ENCODE measurements at regions of chr1 and their contacts with region 1.

Region 1: GRCh38 chr1:45521398-45522323 is at the start of gene PRDX1:
- DNase-seq: peak; percentile 97
- H3K4me3 Mint-ChIP-seq: peak within 1 kb of the TSS; percentile 95
- H3K27ac Mint-ChIP-seq: peak within 1 kb of the TSS; percentile 88
- H3K4me1 Mint-ChIP-seq: peaks cover 49% of the 10 kb centered on the region
- H3K27me3 Mint-ChIP-seq: peaks cover 10% of the 10 kb centered on the region
- total RNA-seq, gene PRDX1: 296 to 309 TPM

Region 2: DNA sequence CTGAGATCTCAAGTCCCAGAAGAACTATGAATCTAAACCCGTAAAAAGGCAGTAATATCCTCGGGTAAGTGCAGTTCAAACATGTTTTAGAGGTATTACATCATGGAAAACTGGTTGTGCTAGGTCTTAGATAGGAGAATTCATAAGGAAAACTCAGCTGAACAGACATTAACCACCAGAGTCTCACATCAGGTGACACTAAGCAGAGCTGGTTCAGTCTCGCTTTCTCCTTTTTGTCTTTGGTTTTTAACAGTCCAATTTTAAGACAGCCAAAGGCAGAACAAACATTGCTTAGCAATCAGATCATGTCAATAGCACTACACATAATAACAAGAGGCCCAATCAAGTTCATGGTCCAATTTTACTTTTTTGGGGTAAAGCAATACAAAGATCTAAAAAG is 118.4 kb before region 1 on chr1:
- CTCF ChIA-PET with region 1: no interaction called
- POLR2A ChIA-PET with region 1: no interaction called
- DNase-seq: no peak
- H3K4me3 Mint-ChIP-seq: no peak overlapping the region
- H3K27ac Mint-ChIP-seq: no peak overlapping the region
- H3K4me1 Mint-ChIP-seq: no peaks in the 10 kb centered on the region
- H3K27me3 Mint-ChIP-seq: no peaks in the 10 kb centered on the region

Region 3: DNA sequence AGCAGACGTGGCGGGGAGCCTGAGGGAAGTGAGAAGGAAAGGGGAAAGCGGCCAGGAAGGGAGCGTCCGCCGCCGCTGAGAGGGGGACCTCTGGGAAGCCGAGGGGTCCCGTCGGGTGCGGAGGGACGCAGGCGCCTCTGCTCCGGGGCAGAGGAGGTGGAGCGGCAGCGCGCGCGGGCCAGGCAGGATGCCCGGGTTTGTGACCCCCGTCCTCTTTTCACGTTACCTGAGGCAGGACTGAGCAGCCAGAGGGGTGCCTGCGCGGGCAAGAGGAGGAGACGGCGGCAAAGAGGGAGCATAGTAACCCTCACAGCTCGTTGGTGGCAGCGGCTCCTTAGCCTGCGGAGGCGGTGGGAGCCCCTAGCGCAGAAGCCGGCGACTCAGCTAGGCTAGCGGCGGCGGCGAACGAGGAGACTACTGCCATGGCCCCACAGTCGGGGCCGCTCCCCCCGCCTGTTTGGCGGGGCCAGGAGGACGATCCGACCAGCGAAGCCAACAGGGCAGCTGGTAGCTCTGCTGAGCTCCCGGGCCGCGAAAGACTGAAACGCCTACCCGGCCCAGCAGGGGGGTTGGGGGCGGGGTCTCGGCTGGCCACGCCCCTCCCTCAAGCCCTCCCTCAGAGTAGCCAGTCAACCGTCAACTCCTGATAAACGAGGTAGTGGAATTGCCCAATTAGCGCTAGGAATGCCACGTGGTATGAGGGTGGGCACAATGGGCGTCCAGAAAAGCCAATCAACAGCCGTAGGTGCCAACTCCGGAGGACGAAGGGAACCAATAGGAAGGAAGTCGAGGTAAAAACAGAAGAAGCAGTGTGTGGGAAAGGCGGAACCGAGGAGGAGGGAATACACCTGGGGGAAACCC is 30.8 kb before region 1 on chr1 and contains the start of gene TESK2:
- CTCF ChIA-PET with region 1: interaction called, 7 read pairs
- POLR2A ChIA-PET with region 1: interaction called, 11 read pairs
- DNase-seq: peak; percentile 98
- H3K4me3 Mint-ChIP-seq: no peak within 1 kb of the TSS
- H3K27ac Mint-ChIP-seq: no peak within 1 kb of the TSS
- H3K4me1 Mint-ChIP-seq: peaks cover 7% of the 10 kb centered on the region
- H3K27me3 Mint-ChIP-seq: peaks cover 7% of the 10 kb centered on the region
- total RNA-seq, gene TESK2: 3.7 to 4.3 TPM

Region 4: DNA sequence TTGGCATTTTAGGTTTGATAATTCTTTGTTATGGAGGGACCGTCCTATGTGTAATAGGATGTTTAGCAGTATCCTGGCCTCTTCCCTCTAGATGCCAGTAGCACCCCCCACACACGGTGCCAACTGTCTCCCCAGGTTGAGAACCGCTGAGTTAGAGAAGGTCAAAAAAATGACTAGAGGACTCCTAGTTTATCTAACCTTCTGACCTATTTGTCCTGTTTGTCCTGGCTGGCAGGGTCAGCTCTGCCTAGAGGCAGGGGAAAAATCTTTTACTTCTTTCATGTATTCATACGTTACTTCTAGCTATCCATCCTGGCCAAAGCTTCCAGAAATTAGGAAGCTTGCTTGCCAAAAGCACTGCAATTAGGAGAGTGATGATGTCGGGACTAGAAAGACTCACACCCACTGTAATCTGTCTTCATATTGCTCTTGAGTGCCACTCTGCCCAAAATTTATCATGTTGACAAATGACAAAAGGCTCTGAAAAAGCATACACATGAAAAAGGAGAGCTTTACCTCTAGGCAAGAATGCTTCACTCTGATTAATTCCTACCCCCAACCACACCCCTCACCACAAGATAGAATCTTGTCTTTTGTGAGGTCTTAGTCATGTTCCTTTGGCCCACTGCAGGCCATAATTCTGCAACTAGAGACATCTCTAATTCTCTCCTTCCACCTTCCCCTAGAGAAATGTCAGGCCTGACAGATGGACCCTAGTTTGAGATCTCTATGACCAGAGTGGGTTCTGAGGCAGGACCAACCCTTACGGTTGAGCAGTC is 14.5 kb after region 1 on chr1:
- CTCF ChIA-PET with region 1: interaction called, 7 read pairs
- POLR2A ChIA-PET with region 1: interaction called, 63 read pairs
- DNase-seq: no peak
- H3K4me3 Mint-ChIP-seq: no peak overlapping the region
- H3K27ac Mint-ChIP-seq: no peak overlapping the region
- H3K4me1 Mint-ChIP-seq: peaks cover 21% of the 10 kb centered on the region
- H3K27me3 Mint-ChIP-seq: peaks cover 3% of the 10 kb centered on the region

Region 5: GRCh38 chr1:45550401-45551351 is 29.0 kb after region 1 on chr1 and contains the start of gene AKR1A1:
- CTCF ChIA-PET with region 1: interaction called, 23 read pairs
- POLR2A ChIA-PET with region 1: interaction called, 142 read pairs
- DNase-seq: peak; percentile 91
- H3K4me3 Mint-ChIP-seq: peak within 1 kb of the TSS; percentile 93
- H3K27ac Mint-ChIP-seq: peak within 1 kb of the TSS; percentile 78
- H3K4me1 Mint-ChIP-seq: peaks cover 28% of the 10 kb centered on the region
- H3K27me3 Mint-ChIP-seq: peaks cover 3% of the 10 kb centered on the region
- total RNA-seq, gene AKR1A1: 144 TPM

Region 6: GRCh38 chr1:45569962-45570581 is 48.4 kb after region 1 on chr1:
- CTCF ChIA-PET with region 1: interaction called, 20 read pairs
- POLR2A ChIA-PET with region 1: interaction called, 34 read pairs
- DNase-seq: peak; percentile 79
- H3K4me3 Mint-ChIP-seq: no peak overlapping the region
- H3K27ac Mint-ChIP-seq: no peak overlapping the region
- H3K4me1 Mint-ChIP-seq: no peaks in the 10 kb centered on the region
- H3K27me3 Mint-ChIP-seq: no peaks in the 10 kb centered on the region

Region 7: DNA sequence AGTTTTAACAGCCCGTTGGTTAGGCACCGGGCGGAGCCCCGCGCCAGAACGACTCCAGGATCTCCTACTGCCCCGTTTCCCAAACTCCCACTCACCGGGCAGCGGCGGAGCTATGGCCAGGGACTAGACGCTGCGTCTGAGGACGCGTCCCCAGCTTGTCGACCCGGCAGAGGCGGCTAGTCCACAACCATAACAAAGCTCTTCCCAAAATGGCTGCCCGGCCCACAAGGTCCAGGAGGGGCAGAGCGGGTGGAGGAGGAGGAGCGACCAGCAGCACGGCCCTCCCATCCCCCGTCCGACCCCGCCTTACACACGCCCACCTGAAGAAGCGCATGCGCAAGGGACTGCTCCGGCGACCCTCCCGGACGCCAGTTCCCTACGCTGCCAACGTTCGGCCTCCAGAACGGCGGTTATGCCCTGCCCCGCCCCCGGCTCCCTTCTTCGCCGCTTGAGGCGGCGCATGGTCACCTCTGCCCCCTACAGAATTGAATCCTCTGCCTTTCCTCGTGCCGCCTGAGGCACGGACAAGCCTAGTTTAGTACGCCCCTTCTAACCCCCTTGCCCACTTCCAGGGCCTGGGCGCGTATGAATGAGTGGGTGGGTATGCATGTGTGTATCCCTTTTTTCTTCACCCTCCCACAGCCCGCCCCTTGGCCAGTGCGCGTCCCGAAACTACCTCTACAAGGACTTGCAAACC is 164.8 kb after region 1 on chr1 and contains the start of gene GPBP1L1:
- CTCF ChIA-PET with region 1: no interaction called
- POLR2A ChIA-PET with region 1: interaction called, 15 read pairs
- DNase-seq: peak; percentile 98
- H3K4me3 Mint-ChIP-seq: peak within 1 kb of the TSS; percentile 100
- H3K27ac Mint-ChIP-seq: peak within 1 kb of the TSS; percentile 100
- H3K4me1 Mint-ChIP-seq: peaks cover 55% of the 10 kb centered on the region
- H3K27me3 Mint-ChIP-seq: no peaks in the 10 kb centered on the region
- total RNA-seq, gene GPBP1L1: 130 to 134 TPM

Measured in activated CD4-positive, alpha-beta memory T cell treated with anti-CD3 and anti-CD28 coated beads, Interleukin-2, amount 10 ng/mL, durations not matched to agents 7 days and 5 days (primary cell).